H1 (cell line): ENCODE measurements at regions of chr7 and their contacts with region 1.

Region 1: DNA sequence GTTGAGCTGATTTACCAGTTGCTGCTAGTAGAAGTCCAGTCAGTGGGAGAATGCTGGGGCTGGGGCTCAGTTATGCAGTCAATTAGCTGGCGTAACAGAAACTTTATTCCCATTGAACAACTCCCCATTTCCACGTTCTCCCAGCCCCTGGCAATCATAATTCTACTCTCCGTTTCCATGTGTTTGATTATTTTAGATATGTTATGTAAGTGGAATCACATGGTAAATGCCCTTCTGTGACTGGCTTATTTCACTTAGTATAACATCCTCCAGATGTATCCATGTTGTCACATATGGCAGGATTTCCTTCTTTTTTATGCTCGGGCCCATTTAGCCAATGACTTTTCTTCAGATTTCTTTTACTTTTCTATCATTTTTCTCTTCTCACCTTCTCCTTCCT is 61.1 kb upstream of the EXOC4 start:
- DNase-seq: no peak
- H3K4me3 ChIP-seq: no peak overlapping the region
- H3K27ac ChIP-seq: no peak overlapping the region
- H3K4me1 ChIP-seq: peaks cover under 1 to 13% (median 9%) of the 10 kb centered on the region in 4 experiments; a peak in 5 of 7 replicates
- H3K27me3 ChIP-seq: no peaks in the 10 kb centered on the region
- CTCF ChIP-seq: no peak
- EP300 ChIP-seq: no peak
- POLR2A ChIP-seq: no peak
- RAD21 ChIP-seq: no peak

Region 2: DNA sequence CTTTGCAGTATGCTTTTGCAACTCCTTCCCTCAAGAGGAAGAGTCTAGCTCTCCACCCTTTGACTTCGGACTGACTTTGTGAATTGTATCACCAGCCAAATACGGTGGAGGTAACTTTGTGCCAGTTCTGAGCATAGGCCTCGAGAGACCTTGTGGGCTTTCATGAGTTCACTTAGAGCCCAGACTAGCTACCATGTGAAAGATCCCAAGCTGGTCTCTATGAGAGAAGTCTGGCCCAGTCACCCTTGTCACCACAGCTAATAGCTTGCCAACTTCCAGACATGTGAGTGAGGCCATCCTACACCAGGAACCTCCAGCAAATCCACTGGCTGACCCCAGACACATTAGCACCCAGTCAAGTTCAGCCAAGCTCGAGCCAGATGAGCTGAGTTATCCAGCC is 11.1 kb before region 1 on chr7:
- CTCF ChIA-PET with region 1: interaction called, 11 read pairs
- POLR2A ChIA-PET with region 1: no interaction called
- DNase-seq: no peak
- H3K4me3 ChIP-seq: no peak overlapping the region
- H3K27ac ChIP-seq: no peak overlapping the region
- H3K4me1 ChIP-seq: no peaks in the 10 kb centered on the region
- H3K27me3 ChIP-seq: no peaks in the 10 kb centered on the region
- CTCF ChIP-seq: no peak
- EP300 ChIP-seq: no peak
- POLR2A ChIP-seq: no peak
- RAD21 ChIP-seq: no peak

Region 3: GRCh38 chr7:133253519-133253875 is 61.7 kb after region 1 on chr7:
- CTCF ChIA-PET with region 1: no interaction called
- POLR2A ChIA-PET with region 1: no interaction called
- DNase-seq: no peak
- H3K4me3 ChIP-seq: peak overlapping the region; percentile 59 to 95 (median 88)
- H3K27ac ChIP-seq: peak overlapping the region; percentile 82
- H3K4me1 ChIP-seq: no peaks in the 10 kb centered on the region; a peak in 2 of 7 replicates
- H3K27me3 ChIP-seq: no peaks in the 10 kb centered on the region
- CTCF ChIP-seq: no peak
- EP300 ChIP-seq: no peak
- POLR2A ChIP-seq: no peak
- RAD21 ChIP-seq: no peak